ENCODE measurements at regions of chr19 and their contacts with region 1.

Region 1: DNA sequence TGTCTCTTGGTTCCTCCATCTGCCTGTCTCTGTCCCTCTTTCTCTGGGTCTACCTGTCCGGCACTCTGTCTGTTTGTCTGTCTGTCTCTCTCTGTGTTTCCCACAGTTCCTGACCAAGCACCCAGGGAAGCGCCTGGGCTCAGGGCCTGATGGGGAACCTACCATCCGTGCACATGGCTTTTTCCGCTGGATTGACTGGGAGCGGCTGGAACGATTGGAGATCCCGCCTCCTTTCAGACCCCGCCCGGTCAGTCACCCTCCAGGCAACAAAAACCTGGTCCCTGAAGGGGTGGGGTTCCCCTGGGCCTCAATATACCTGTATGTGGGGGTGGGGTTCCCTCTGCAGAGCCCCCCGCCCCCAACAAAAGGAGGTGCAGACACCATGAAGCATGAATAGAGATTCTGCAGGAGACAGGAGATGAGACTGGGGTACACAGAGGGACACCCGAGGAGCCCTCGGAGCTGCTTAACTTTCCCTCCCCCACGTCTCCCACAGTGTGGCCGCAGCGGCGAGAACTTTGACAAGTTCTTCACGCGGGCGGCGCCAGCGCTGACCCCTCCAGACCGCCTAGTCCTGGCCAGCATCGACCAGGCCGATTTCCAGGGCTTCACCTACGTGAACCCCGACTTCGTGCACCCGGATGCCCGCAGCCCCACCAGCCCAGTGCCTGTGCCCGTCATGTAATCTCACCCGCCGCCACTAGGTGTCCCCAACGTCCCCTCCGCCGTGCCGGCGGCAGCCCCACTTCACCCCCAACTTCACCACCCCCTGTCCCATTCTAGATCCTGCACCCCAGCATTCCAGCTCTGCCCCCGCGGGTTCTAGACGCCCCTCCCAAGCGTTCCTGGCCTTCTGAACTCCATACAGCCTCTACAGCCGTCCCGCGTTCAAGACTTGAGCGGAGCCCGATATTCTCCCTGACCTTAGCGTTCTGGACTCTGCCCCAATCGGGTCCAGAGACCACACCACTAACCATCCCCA is 2.6 kb upstream of the CACNG7 start:
- DNase-seq: peak in 1 of 2 donors; percentile 49
- ATAC-seq: peak; percentile 46

Region 2: DNA sequence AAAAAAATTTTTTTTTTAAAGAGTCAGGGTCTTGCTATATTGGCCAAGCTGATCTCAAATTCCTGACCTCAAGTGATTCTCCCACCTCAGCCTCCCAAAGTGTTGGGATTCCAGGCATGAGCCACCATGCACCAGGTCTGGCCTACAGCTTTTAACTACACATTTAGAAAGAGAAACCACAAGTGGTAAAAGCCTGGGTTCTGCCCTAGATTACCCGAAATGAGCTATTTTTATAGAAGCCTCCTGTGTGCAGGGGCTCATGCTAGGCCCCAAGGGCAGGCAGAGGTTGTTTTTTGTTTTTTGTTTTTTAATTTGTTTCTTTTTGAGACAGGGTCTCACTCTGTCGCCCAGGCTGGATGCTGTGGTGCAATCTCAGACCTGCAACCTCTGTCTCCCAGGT is 52.8 kb before region 1 on chr19:
- intact Hi-C with region 1: no loop called
- DNase-seq: no peak
- ATAC-seq: no peak

Region 3: GRCh38 chr19:53991224-53992113 is 85.0 kb after region 1 on chr19 and contains the start of gene CACNG6:
- intact Hi-C with region 1: no loop called
- DNase-seq: no peak
- ATAC-seq: no peak
- total RNA-seq, gene CACNG6: not detected

Region 4: DNA sequence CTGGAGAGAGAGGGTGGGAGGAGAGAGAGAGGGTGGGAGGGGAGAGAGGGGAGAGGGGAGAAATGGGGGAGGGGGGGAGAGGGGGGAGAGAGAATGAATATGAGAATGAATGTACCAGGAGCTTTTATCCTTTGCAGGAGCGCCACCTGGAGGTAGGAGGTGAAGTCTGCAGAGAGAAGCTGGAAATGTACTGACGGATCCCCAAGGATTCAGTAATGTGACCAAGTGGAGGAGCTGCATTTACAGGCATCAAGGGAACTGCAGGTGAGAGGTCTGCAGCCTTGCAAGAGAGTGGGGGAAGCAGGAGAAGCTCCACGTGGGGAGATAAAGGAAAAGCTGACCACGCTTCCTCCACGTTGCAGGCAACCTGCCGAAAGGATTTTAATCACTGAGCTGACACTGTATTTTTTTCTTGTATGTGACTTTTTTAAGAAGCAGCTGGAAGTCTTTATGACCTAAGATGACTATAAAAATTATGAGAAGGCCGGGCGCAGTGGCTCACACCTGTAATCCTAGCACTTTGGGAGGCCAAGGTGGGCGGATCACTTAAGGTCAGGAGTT is 123.5 kb after region 1 on chr19:
- intact Hi-C with region 1: loop called in 1 of 2 experiments (anchors 10 kb)
- DNase-seq: peak; percentile 27 to 67
- ATAC-seq: peak; percentile 62

Measured in left colon (tissue), 2 donors.